Motor neuron (in vitro differentiated cells): ENCODE measurements at regions of chr5 and their contacts with region 1.

Region 1: GRCh38 chr5:115309751-115310370 is 13.4 kb upstream of the CCDC112 start:
- ATAC-seq: peak in 3 of 8 experiments; percentile 27 to 42 (median 33)
- H3K4me3 ChIP-seq: no peak overlapping the region
- H3K27ac ChIP-seq: no peak overlapping the region
- H3K4me1 ChIP-seq: no peaks in the 10 kb centered on the region

Region 2: DNA sequence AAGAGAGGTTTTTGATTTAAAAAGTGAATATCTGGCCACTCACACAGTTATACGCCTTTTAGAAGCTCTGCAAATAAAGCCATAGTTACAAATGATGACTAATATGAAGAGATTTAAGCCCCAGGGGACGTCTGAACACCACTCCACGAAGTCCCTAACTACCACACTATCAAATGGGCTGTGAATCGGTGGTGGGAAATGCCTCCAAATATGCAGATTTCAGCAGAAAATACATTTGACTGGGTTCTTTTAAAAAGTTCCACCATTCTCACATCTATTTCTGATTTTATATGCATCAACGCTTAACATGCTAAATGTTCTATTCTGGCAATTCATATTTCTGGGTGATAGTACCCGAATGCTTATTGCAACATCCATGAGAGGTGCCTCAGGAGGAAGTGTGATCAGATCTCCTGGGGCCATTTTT is 269.9 kb after region 1 on chr5:
- in situ Hi-C with region 1: loop called in 7 of 9 experiments (anchors 10 to 25 kb)
- ATAC-seq: peak in 1 of 8 experiments; percentile 41
- H3K4me3 ChIP-seq: no peak overlapping the region
- H3K27ac ChIP-seq: no peak overlapping the region
- H3K4me1 ChIP-seq: peaks cover 0 to 2% of the 10 kb centered on the region in 2 donors

Region 3: DNA sequence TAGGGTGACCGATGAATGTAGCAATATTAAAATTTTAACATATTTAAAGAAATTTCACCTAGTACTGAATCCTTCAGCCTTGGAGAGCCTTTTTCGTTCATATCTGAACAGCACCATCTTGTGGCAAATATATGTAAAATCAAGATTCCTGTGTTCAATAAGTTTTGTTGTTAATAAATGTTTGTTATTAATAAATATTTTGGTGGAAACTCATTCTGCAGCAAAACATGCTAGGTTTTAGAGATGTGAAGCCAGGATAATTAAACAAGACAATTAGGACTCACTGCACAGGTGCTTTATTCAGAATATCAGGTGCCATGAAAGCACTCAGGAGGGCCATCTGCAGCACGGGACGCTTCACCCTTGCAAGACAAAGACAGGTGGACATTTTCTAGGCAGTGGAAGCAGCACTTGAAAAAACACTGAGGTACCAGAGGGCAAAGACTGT is 276.8 kb after region 1 on chr5:
- in situ Hi-C with region 1: loop called in 7 of 9 experiments (anchors 10 to 25 kb)
- ATAC-seq: peak in 4 of 8 experiments; percentile 19 to 76 (median 52)
- H3K4me3 ChIP-seq: no peak overlapping the region
- H3K27ac ChIP-seq: no peak overlapping the region
- H3K4me1 ChIP-seq: no peaks in the 10 kb centered on the region

Region 4: GRCh38 chr5:115599497-115599896 is 289.6 kb after region 1 on chr5:
- in situ Hi-C with region 1: loop called in 5 of 9 experiments (anchors 10 to 25 kb)
- ATAC-seq: peak; percentile 21 to 64 (median 47)
- H3K4me3 ChIP-seq: no peak overlapping the region
- H3K27ac ChIP-seq: no peak overlapping the region
- H3K4me1 ChIP-seq: peaks cover 7% of the 10 kb centered on the region in 2 donors

Region 5: GRCh38 chr5:115841382-115842088 is 531.7 kb after region 1 on chr5 and contains the starts of genes AP3S1 and ATG12:
- in situ Hi-C with region 1: loop called in 2 of 9 experiments (anchors 25 kb)
- ATAC-seq: peak; percentile 81 to 85 (median 83)
- H3K4me3 ChIP-seq: peak within 1 kb of the TSS; percentile 60 to 85 (median 75)
- H3K27ac ChIP-seq: peak within 1 kb of the TSS; percentile 88 to 92
- H3K4me1 ChIP-seq: peaks cover 18 to 22% of the 10 kb centered on the region in 2 donors
- total RNA-seq, gene AP3S1: 35.4 to 92.3 (median 59.6) TPM
- total RNA-seq, gene ATG12: 30.8 to 64.0 (median 43.1) TPM

Region 6: DNA sequence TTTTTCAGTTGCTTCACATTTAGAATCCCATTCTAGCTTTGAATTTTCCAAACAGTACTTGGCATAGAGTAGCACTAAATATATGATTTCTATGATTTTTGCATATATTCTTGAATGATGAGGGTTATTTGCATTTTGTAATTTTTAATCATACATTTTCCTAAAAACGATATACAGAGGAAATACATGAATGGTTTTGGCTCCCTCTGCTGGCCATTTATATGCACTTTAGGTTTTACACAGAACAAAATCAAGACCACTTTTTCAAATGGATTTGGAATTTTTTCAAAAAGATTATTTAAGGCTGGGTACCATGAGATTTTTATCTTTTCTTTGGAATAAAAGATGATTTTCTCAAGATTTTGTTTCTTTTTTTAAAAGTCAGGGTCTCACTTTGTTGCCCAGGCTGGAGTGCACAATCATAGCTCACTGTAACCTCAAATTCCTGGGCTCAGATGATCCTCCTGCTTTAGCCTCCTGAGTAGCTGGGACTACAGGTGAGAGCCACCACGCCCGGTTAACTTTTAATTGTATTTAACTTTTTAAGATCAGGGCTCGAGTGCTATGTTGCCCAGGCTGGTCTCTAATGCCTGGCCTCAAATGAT is 758.3 kb after region 1 on chr5:
- in situ Hi-C with region 1: loop called in 3 of 9 experiments (anchors 25 kb)
- ATAC-seq: peak in 3 of 8 experiments; percentile 41 to 74 (median 49)
- H3K4me3 ChIP-seq: no peak overlapping the region
- H3K27ac ChIP-seq: no peak overlapping the region
- H3K4me1 ChIP-seq: no peaks in the 10 kb centered on the region